AG04450 (cell line): ENCODE measurements at regions of chr2 and their contacts with region 1.

Region 1: GRCh38 chr2:45494269-45494977 is 116.6 kb downstream of the SRBD1 start:
- DNase-seq: peak; percentile 41
- H3K4me3 ChIP-seq: no peak overlapping the region
- H3K27ac ChIP-seq: no peak overlapping the region
- H3K27me3 ChIP-seq: no peaks in the 10 kb centered on the region
- CTCF ChIP-seq: peak; percentile 81

Region 2: GRCh38 chr2:44974064-44974715 is 520.2 kb before region 1 on chr2:
- CTCF ChIA-PET with region 1: interaction called, 287 read pairs
- POLR2A ChIA-PET with region 1: no interaction called
- DNase-seq: no peak
- H3K4me3 ChIP-seq: no peak overlapping the region
- H3K27ac ChIP-seq: no peak overlapping the region
- H3K27me3 ChIP-seq: peaks cover 46% of the 10 kb centered on the region
- CTCF ChIP-seq: peak; percentile 42

Region 3: DNA sequence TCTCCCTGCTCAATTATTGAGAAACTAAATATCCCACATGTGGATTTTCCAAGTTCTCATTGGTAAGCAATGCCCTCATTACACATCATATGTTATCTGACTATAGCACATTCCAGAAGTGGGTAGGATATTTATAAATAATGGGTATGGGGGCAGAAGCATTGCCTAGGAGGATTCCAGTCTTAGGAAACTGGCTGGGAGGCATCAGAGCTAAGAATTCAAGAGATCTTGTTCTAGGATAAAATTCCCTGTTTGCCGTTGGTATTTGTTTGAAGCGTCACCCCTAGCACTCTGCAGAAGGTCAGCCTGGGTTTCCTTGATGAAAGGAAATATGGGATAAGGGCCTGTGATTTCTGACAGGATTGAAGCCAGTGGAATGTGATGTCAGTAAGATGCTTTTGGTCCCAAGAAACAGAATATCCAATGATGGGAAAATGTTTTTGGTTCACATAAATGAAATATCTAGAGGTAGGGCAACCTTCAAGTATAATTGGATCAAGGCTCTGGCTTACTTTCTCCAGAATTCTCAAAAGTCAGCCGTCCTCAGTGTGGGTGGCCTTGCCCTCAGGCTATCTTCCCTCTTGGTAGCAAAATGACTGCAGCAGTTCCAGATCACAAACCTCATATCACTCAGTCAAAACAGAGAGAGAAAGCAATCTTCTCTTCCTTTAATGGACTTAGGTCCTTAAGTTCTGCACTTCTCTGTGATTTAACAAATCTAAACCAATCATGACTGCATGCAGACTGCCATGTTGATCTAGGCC is 505.1 kb before region 1 on chr2:
- CTCF ChIA-PET with region 1: interaction called, 287 read pairs
- POLR2A ChIA-PET with region 1: no interaction called
- DNase-seq: no peak
- H3K4me3 ChIP-seq: no peak overlapping the region
- H3K27ac ChIP-seq: no peak overlapping the region
- H3K27me3 ChIP-seq: peaks cover 22% of the 10 kb centered on the region
- CTCF ChIP-seq: no peak

Region 4: DNA sequence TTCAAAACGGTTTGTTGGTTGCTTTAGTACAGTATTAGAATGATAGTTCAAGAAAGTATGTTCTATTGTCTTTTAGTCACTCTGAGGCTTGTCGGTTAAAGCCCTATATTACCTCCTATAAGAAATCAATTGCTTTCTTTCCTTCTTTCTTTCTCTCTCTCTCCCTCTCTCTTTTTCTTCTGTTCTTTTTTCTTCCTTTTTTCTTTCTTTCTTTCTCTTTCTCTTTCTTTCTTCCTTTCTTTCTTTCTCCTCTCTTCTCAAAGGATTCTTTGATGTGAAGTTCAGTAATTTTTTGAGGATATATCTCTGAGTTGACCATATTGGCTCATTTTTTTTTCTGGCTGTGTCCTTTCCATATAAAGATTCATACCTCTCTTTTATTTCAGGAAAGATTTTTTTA is 132.8 kb before region 1 on chr2:
- CTCF ChIA-PET with region 1: no interaction called
- POLR2A ChIA-PET with region 1: no interaction called
- DNase-seq: no peak
- H3K4me3 ChIP-seq: no peak overlapping the region
- H3K27ac ChIP-seq: no peak overlapping the region
- H3K27me3 ChIP-seq: no peaks in the 10 kb centered on the region
- CTCF ChIP-seq: no peak

Region 5: DNA sequence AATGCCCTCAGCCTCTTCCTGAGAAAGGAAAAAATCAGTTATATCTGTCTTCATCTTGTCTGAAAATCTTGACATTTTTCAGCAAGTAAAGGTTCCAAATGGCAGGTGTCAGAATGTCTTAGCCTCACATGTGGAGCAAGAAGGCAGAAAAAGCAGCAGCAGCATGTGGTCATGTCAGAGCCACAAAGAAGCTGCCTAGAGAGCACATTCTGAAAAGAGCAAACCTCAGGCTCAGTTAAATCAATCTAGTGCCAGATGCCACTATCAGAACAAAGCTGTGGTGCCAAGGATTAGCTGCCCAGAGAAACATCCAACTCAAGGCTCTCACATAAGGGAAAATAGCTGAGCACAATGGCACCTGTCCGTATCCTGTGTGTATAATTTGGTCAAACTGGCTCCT is 10.7 kb after region 1 on chr2:
- CTCF ChIA-PET with region 1: interaction called, 32 read pairs
- POLR2A ChIA-PET with region 1: no interaction called
- DNase-seq: no peak
- H3K4me3 ChIP-seq: no peak overlapping the region
- H3K27ac ChIP-seq: no peak overlapping the region
- H3K27me3 ChIP-seq: no peaks in the 10 kb centered on the region
- CTCF ChIP-seq: no peak

Region 6: DNA sequence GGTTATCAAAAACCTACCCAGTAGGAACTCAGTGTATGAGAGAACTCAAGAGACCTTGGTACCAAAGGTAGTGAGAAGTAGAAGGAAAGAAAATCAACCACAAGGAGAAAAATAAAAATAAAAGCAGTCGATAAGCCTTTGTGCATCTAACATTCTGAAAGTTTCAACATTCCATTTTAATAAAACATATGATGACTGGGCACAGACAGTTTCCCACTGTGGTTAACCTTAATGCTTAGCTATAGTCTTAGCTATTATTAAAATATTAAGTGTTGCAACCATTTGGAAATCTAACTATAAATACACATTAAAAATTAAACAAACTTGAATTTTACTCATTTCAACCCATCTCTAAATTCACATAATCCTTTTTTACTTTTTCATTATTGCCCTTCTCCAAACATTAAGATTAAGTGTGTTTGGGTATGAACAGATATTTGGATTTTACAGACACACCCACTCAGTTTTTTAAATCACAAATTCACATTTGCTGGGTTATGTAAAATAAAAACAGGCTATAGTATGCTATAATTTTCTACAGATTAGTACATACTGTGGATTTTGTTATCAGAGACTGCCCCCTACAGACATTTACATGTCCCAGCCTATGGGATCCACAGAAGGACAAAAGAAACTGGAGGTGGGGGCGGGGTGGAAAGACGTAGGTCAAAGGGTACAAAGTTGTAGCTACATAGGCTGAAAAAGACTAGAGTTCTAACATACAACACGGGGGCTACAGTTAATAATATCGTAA is 83.8 kb after region 1 on chr2:
- CTCF ChIA-PET with region 1: interaction called, 15 read pairs
- POLR2A ChIA-PET with region 1: no interaction called
- DNase-seq: no peak
- H3K4me3 ChIP-seq: no peak overlapping the region
- H3K27ac ChIP-seq: no peak overlapping the region
- H3K27me3 ChIP-seq: no peaks in the 10 kb centered on the region
- CTCF ChIP-seq: peak; percentile 59